ENCODE measurements at regions of chr14 and their contacts with region 1.

Region 1: DNA sequence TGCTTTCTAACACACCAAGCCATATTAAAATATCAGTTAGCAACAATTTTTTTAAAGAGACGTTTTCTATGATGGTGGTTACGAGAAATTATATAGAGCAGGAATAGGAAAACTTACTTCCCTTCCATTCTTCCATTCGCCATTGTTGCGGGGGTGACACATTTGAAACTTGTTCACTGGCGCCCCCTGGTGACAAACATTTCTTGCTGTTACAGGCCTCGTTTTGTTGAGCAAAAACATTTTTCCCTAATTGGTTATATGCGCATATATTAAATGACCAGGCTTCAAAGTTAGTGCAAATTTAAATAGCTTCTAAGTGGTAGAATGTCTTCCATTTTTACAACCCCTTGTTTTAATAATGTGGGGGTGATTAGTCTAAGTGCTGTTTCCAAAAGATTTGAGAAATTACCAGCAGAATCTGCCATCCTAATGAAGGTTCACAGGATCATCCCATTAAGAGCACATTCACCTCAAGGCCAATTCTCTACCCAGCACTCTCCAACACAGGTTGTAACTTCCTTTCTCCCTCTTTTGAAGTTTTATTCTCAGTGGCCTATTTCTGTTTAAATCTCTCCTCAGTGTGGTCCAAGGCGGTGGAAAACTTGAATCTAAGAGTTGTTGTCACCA is 1124.7 kb downstream of the FLRT2 start:
- DNase-seq: peak in 1 of 2 experiments; percentile 89
- H3K4me3 ChIP-seq: no peak overlapping the region
- H3K27ac ChIP-seq: no peak overlapping the region
- H3K4me1 ChIP-seq: no peaks in the 10 kb centered on the region
- H3K27me3 ChIP-seq: no peaks in the 10 kb centered on the region
- CTCF ChIP-seq: peak; percentile 43 to 58 (median 52)
- EP300 ChIP-seq: no peak
- POLR2A ChIP-seq: no peak
- RAD21 ChIP-seq: peak; percentile 67 to 69

Region 2: DNA sequence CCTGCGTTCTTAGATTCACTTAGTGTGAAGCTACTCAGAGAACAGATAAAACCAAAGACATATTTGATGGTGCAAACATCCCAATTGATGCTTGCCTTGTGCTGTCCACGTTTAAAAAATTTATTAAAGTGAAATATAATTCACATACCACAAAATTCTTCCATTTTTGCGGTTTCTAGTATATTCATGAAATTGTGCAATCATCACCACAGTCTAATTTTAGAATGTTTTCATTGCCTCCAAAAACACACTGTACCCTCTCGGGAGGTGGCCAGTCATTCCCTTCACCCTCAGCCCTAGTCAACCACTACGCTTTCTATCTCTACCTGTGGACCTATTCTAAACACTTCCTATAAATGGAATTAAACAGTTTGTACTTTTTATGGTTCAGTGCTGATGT is 15.5 kb before region 1 on chr14:
- CTCF ChIA-PET with region 1: interaction called, 31 read pairs
- POLR2A ChIA-PET with region 1: no interaction called
- DNase-seq: no peak
- H3K4me3 ChIP-seq: no peak overlapping the region
- H3K27ac ChIP-seq: no peak overlapping the region
- H3K4me1 ChIP-seq: no peaks in the 10 kb centered on the region
- H3K27me3 ChIP-seq: no peaks in the 10 kb centered on the region
- CTCF ChIP-seq: no peak
- EP300 ChIP-seq: no peak
- POLR2A ChIP-seq: no peak
- RAD21 ChIP-seq: no peak